ENCODE measurements at regions of chr11 and their contacts with region 1.

Region 1: DNA sequence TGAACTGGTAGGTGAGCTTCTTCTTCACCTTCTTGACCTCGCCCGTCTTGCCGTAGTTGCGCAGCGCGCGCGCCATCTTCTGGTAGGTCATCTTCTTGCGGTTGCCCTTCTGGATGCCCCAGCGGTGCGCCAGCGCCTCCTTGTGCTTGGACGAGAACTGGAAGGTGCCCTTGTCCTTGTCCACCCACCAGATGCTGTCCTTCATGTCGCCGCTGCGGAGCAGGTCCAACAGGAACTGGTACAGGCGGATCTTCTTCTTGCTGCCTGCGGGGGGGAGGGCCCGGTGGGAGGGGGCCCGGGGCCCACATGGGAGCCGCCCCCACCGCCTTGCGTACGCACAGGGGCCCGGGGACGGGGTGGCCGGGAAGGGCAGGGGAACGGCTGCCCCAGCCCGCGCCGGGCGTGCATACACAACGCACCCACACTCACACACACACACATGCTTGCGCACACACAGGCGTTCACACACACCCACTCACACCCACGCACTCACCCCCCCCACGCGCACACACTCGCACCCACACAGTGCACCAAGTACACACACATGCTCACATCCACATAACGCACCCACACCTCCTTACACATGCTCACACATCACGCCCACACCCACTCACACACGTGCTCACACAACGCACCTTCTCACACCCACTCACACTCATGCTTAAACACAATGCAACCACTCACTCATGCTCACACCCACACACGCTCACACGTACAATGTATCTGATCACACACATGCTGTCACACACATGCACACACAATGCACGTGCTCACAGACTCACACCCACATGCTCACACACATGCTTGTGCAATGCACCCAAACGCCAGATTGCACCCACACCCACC is 3.0 kb upstream of the MYBPC3 start:
- DNase-seq: peak; percentile 59
- H3K4me3 ChIP-seq: peak overlapping the region; percentile 36
- CTCF ChIP-seq: peak; percentile 100

Region 2: DNA sequence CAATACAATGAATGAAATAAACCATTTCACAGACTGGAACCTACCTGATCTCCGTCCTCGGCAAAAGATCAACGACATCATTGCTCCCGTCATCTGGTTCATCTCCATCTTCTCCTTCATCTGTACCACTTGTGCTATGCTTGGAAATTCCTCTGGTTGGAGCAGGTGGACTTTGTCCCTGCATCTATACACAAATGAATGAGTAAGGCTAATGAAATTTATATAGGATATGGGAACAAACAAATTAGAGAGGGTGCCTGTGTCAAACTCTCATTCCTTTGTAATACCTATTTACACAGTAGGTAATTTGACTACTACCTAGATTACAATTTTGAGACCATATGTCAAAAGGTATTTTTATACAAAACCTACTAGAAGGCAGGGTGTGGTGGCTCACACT is 577.1 kb before region 1 on chr11:
- CTCF ChIA-PET with region 1: no interaction called
- POLR2A ChIA-PET with region 1: no interaction called
- DNase-seq: no peak
- H3K4me3 ChIP-seq: no peak overlapping the region
- CTCF ChIP-seq: no peak

Region 3: DNA sequence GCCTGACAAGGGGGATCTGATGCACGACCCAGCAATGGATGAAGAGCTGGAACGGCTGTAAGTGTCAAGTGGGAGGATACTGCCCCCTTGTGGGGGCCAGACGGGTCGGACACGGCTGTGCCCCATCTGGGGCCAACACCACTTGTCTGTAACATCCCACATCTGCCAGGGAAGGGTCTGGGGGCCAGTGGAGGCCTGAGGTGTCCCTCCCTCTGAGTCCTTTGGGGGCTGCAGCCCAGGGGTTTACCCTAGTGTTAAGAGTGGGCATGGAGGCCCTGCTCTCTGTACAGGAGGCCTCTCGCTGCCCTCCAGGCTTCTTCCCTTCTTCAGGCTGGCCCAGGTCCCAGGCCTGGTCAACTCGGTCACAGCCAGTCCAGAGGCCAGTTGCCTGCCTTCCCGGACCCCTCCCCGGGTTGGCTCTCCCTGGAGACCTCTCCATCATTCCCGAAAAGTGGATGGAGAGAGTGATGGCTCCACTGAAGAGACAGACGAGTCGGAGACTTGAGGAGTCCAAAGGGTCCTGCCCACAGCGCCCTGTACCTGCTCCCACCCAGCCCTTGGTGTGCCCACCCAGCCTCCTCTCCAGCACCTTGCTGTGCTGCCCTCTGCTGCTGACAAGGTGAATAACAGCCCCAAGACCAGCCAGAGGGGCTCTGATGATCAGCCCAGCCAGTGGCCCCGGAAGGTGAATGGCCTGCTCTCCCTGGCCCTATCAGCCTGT is 194.2 kb before region 1 on chr11:
- CTCF ChIA-PET with region 1: interaction called, 12 read pairs
- POLR2A ChIA-PET with region 1: no interaction called
- DNase-seq: no peak
- H3K4me3 ChIP-seq: no peak overlapping the region
- CTCF ChIP-seq: peak; percentile 85

Region 4: GRCh38 chr11:47186076-47186936 is 169.2 kb before region 1 on chr11 and contains the start of gene PACSIN3:
- CTCF ChIA-PET with region 1: interaction called, 99 read pairs
- POLR2A ChIA-PET with region 1: no interaction called
- DNase-seq: no peak
- H3K4me3 ChIP-seq: peak within 1 kb of the TSS; percentile 71
- CTCF ChIP-seq: peak; percentile 12

Region 5: GRCh38 chr11:47259178-47259977 is 96.1 kb before region 1 on chr11:
- CTCF ChIA-PET with region 1: interaction called, 16 read pairs
- POLR2A ChIA-PET with region 1: no interaction called
- DNase-seq: no peak
- H3K4me3 ChIP-seq: no peak overlapping the region
- CTCF ChIP-seq: peak; percentile 65

Region 6: GRCh38 chr11:47328404-47329390 is 26.8 kb before region 1 on chr11:
- CTCF ChIA-PET with region 1: interaction called, 21 read pairs
- POLR2A ChIA-PET with region 1: no interaction called
- DNase-seq: no peak
- H3K4me3 ChIP-seq: no peak overlapping the region
- CTCF ChIP-seq: no peak

Region 7: GRCh38 chr11:47433157-47433556 is 77.7 kb after region 1 on chr11:
- CTCF ChIA-PET with region 1: interaction called, 11 read pairs
- POLR2A ChIA-PET with region 1: no interaction called
- DNase-seq: no peak
- H3K4me3 ChIP-seq: no peak overlapping the region
- CTCF ChIP-seq: no peak

Region 8: DNA sequence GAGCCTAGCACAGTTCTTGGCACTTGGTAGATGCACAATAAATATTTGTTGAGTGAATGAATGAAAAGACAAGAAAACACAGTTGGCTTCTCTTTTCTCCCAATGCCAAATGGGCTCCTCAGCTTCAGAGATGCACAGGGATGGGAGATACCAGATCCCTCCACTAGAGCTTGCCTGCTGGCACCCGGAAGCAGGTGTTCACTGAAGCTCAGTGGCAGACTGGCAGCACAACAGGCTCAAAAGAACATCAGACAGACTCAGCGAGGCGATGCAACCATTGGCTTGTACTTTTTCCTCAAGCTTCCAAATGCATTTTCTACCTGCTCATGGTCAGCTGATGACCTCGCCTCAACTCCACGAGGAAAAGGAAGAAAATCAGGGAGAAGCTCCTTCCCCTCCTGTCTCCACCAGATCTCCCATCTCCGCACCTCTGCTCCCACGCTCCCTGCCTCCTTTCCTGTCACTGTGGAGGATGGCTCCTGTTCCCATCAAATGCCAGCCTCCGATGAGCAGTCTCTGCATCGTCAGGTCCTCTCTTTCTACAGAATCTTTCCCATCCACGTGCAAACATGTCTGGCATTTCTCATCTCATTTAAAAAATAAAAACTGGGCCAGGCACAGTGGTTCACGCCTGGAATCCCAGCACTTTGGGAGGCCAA is 87.7 kb after region 1 on chr11:
- CTCF ChIA-PET with region 1: no interaction called
- POLR2A ChIA-PET with region 1: no interaction called
- DNase-seq: no peak
- H3K4me3 ChIP-seq: no peak overlapping the region
- CTCF ChIP-seq: no peak

Measured in AG04449 (cell line).